Calu3 (cell line): ENCODE measurements at regions of chr2 and their contacts with region 1.

Region 1: GRCh38 chr2:42828487-42829425 is 36.4 kb upstream of the HAAO start:
- DNase-seq: peak; percentile 82
- H3K4me3 Mint-ChIP-seq: no peak overlapping the region
- H3K27ac Mint-ChIP-seq: no peak overlapping the region
- H3K4me1 Mint-ChIP-seq: peaks cover 27% of the 10 kb centered on the region
- H3K27me3 Mint-ChIP-seq: no peaks in the 10 kb centered on the region
- CTCF ChIP-seq: peak; percentile 90

Region 2: DNA sequence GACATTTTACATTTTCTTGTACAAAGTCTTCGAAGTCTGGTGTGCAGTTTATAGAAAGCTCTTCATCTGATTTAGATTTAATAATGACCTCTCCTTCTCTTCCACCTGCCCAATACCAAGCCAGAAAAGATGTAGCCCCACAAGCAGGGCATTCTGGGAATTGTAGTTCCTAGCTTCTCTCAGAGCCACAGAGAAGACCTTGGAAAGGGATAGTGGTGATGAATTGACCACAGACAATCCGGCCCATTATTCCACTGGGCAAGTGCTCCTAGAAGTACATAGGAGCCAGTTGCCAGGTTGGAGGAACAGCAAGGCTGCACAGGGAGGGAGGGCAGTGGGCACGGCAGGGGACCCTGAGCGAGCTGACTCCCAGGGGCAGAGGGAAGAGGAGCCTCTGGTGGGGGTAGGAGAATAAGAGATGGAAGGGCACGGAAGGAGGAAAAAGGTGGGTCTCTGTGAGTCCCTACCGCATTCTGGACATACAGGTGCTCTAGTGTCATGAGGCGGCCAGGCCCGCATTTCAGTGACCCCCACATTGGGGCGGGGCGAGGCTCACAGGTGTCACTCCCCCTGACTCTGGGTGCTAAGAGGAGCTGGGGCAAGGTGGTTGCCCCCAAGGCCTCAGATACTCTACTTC is 116.1 kb after region 1 on chr2:
- CTCF ChIA-PET with region 1: no interaction called
- intact Hi-C with region 1: loop called (anchors 5 kb)
- DNase-seq: no peak
- H3K4me3 Mint-ChIP-seq: no peak overlapping the region
- H3K27ac Mint-ChIP-seq: no peak overlapping the region
- H3K4me1 Mint-ChIP-seq: peaks cover 29% of the 10 kb centered on the region
- H3K27me3 Mint-ChIP-seq: no peaks in the 10 kb centered on the region
- CTCF ChIP-seq: no peak

Region 3: DNA sequence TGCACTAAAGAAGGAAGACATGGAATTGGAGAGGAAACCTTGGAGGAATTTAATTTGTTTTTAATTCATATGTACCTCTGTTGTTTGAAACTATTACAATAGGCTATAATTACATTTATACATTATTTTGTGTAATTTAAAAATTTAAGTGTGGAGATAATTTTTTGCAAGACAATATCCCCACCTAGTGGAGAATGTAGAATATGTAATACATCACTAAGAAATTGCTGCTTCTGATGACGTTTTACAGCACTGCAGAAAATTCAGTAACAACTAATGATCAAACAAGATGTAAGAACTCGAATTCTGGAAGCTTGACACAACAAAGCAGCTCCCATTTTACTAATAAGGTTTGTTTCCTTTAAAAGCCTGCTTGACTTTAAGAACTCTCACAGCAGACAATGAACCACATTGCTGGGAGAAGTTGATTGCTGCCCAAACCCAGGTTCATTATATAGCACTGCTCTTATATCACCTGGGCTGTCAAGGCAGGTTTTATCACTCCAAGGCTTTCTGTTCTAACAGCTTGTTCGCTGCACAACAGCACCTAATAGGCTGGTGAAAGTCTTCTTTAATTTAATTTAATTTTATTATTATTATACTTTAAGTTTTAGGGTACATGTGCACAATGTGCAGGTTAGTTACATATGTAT is 713.7 kb after region 1 on chr2:
- CTCF ChIA-PET with region 1: no interaction called
- intact Hi-C with region 1: loop called (anchors 1 kb)
- DNase-seq: no peak
- H3K4me3 Mint-ChIP-seq: no peak overlapping the region
- H3K27ac Mint-ChIP-seq: no peak overlapping the region
- H3K4me1 Mint-ChIP-seq: no peaks in the 10 kb centered on the region
- H3K27me3 Mint-ChIP-seq: no peaks in the 10 kb centered on the region
- CTCF ChIP-seq: no peak